ENCODE measurements at regions of chr9 and their contacts with region 1.

Region 1: DNA sequence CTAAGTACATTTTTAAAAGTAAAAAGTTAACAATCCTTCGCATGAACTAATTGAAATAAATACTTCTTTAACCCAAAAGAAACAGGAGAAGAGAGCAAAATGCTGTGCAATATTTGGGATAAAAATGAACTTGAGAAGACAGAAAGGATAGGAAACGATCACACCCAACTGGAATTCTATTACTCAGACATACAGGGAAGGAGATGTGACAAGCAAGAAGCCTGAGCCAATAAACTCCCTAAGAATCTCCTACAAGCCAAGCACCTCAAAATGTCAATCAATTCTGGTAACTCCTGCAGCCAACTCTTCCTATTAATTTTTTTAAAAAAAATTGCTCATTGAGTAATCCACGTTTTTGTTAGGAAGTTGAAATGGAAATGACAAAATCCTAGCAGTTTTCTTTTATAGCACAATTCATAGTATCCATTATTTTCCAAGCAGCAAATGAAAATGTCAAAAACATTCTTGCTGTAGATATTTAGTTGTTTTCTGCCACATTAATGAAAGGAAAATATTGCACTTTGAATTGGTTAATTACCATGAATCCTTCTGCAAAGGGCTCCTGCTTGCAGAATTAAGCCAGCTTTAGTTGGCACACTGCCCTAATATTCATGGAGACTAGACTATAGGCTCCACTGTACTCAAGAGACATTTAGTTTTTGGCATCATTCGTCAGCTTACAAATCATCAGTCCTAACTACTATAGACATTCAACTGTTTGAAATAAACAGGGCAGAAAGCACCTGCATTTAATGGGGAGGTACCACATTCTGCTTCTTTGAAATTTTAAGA is 89.0 kb downstream of the RFX3 start:
- DNase-seq: no peak
- H3K4me3 ChIP-seq: no peak overlapping the region
- H3K27ac ChIP-seq: no peak overlapping the region
- H3K4me1 ChIP-seq: no peaks in the 10 kb centered on the region
- H3K27me3 ChIP-seq: no peaks in the 10 kb centered on the region
- CTCF ChIP-seq: no peak
- POLR2A ChIP-seq: no peak

Region 2: GRCh38 chr9:3240656-3241268 is 196.1 kb before region 1 on chr9:
- intact Hi-C with region 1: loop called (anchors 10 kb)
- DNase-seq: no peak
- H3K4me3 ChIP-seq: no peak overlapping the region
- H3K27ac ChIP-seq: no peak overlapping the region
- H3K4me1 ChIP-seq: no peaks in the 10 kb centered on the region
- H3K27me3 ChIP-seq: no peaks in the 10 kb centered on the region
- CTCF ChIP-seq: peak; percentile 52 to 73 (median 63)
- POLR2A ChIP-seq: no peak

Measured in esophagus squamous epithelium (tissue), 5 donors.